ENCODE measurements at regions of chr7 and their contacts with region 1.

Region 1: DNA sequence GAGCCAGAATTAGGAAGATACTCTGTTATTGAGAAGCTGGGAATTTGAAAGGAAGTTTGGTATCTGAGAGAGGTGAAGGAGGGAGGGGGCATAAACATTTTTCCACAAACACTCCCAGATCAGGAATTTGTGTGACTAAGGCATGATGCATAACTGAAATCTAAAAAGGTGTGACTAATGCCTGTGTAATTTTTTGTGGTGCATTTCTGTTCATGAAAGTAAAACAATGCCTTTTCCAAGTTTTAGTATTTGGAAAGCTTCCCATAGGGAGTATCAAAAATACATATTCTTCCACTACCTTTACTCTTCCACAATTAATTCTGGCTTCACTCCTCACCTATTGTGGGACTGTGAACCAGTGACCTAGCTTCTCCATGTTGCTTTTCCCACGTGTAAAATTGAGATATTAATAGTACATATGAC is 56.4 kb upstream of the CAV2 start:
- DNase-seq: no peak
- H3K4me3 ChIP-seq: no peak overlapping the region
- H3K27ac ChIP-seq: peak overlapping the region; percentile 84
- H3K4me1 ChIP-seq: peaks cover 88% of the 10 kb centered on the region
- H3K27me3 ChIP-seq: no peaks in the 10 kb centered on the region
- CTCF ChIP-seq: no peak

Region 2: GRCh38 chr7:116499168-116500077 is 56.3 kb after region 1 on chr7 and contains the start of gene CAV2:
- intact Hi-C with region 1: loop called (anchors 10 kb)
- DNase-seq: peak; percentile 83
- H3K4me3 ChIP-seq: peak within 1 kb of the TSS; percentile 91
- H3K27ac ChIP-seq: peak within 1 kb of the TSS; percentile 99
- H3K4me1 ChIP-seq: peaks cover 61% of the 10 kb centered on the region
- H3K27me3 ChIP-seq: no peaks in the 10 kb centered on the region
- CTCF ChIP-seq: no peak
- total RNA-seq, gene CAV2: 196 TPM